Prostate gland (tissue), 2 donors: ENCODE measurements at regions of chr11 and their contacts with region 1.

Region 1: DNA sequence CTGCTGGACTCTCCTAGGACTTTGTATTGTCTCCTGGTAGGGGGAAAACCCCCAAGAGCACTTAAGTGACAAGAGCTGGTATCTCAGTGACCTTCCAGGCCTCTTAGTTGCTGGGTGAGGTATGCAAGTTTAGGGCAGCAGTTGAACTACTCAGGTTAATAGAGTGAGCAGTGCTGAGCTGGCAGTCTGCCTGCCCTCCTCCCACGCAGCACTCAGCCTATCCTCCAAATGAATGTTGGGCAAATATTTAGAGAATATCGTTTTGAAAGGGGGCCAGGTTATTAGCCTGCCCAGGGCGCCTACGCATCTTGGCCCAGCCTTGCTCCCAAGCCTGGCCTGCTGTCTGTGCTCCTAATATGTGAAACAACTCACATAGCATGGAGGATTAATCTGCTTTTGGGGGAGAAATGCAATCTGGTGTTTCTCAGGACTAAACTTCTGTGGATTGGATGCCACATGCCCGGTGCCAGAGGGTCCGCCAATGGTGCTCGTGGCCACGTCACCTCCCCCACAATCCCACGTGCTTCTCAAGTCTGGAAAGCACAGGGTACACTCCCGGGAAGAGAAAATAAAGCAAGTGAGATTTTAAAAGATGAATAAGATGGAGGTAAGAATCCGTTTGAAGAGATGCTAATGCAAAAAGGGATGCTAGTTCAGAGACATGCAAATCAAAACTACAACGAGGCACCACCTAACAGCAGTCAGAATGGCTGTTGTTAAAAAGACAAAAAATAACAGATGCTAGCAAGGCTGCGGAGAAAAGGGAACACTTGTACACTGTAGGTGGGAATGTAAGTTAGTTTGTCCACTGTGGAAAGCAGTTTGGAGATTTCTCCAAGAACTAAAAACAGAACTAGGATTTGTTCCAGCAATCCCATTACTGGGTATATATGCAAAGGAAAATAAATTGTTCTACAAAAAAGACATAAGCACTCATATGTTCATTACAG is 67.7 kb downstream of the SPON1 start:
- DNase-seq: peak; percentile 79
- H3K4me3 ChIP-seq: no peak overlapping the region
- H3K27ac ChIP-seq: peak overlapping the region in 1 of 2 donors; percentile 18
- H3K4me1 ChIP-seq: no peaks in the 10 kb centered on the region
- H3K27me3 ChIP-seq: no peaks in the 10 kb centered on the region
- CTCF ChIP-seq: no peak
- POLR2A ChIP-seq: no peak

Region 2: GRCh38 chr11:13907678-13908077 is 122.6 kb before region 1 on chr11:
- intact Hi-C with region 1: no loop called
- DNase-seq: no peak
- H3K4me3 ChIP-seq: no peak overlapping the region
- H3K27ac ChIP-seq: no peak overlapping the region
- H3K4me1 ChIP-seq: no peaks in the 10 kb centered on the region
- H3K27me3 ChIP-seq: no peaks in the 10 kb centered on the region
- CTCF ChIP-seq: no peak
- POLR2A ChIP-seq: no peak

Region 3: DNA sequence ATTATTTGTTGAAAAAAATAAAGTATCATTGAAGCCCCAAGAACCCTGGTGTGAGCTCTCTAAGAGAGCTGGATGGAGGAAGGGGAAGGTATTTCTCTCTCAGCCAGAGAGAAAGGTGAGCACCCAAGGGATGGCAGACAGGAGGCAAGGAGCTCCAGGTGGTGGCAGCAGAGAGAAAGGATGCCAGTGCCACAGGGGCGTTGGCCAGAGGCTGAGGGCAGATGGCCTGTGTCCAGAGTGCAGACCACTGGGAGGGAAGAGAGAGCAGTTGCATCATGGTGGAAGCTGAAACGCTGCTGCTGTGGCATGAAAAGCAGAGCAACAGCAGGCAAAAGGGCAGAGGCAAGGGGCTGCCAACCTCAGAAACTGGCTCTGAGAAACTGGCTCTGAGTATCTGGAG is 59.3 kb before region 1 on chr11:
- intact Hi-C with region 1: loop called (anchors 5 kb)
- DNase-seq: no peak
- H3K4me3 ChIP-seq: no peak overlapping the region
- H3K27ac ChIP-seq: no peak overlapping the region
- H3K4me1 ChIP-seq: no peaks in the 10 kb centered on the region
- H3K27me3 ChIP-seq: no peaks in the 10 kb centered on the region
- CTCF ChIP-seq: peak in 2 of 4 experiments; percentile 31 to 64
- POLR2A ChIP-seq: no peak